Right ventricle myocardium inferior (tissue), 1 donor: ENCODE measurements at regions of chr1 and their contacts with region 1.

Region 1: GRCh38 chr1:40709100-40709801 is 17.7 kb downstream of the NFYC start:
- DNase-seq: peak; percentile 67
- ATAC-seq: peak; percentile 96

Region 2: GRCh38 chr1:40691538-40692428 is 17.5 kb before region 1 on chr1 and contains the start of gene NFYC:
- intact Hi-C with region 1: loop called (anchors 2 kb)
- DNase-seq: peak; percentile 98
- ATAC-seq: peak; percentile 95
- total RNA-seq, gene NFYC: 62.3 TPM